Activated CD8-positive, alpha-beta T cell treated with anti-CD3 and anti-CD28 coated beads, Interleukin-2, amount 10 ng/mL, durations not matched to agents 7 days and 5 days (primary cell): ENCODE measurements at regions of chr12 and their contacts with region 1.

Region 1: DNA sequence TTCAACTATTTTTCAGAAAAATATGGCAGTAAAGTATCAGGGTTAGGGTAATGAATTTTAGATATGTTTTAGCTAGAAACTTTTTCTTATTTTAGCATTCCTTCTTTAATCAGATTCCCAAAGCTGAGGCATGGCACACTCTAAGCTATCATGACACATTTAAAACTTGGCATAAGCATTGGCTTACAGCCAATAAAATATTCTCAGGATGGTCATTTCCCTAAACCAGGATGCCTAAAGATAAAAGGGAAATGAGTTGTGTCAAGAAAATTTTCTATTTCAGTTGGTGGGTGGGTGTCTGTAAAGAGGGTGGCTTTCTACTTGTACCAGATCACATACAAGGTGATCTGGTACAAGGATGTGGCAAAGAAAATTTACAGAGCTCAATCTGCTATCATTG is 47.8 kb downstream of the PEBP1 start:
- DNase-seq: no peak
- ATAC-seq: no peak
- H3K4me3 Mint-ChIP-seq: no peak overlapping the region
- H3K27ac Mint-ChIP-seq: no peak overlapping the region
- H3K4me1 Mint-ChIP-seq: peaks cover 5% of the 10 kb centered on the region
- H3K27me3 Mint-ChIP-seq: no peaks in the 10 kb centered on the region

Region 2: GRCh38 chr12:118164798-118165486 is 18.8 kb before region 1 on chr12:
- CTCF ChIA-PET with region 1: interaction called, 12 read pairs
- POLR2A ChIA-PET with region 1: no interaction called
- DNase-seq: no peak
- ATAC-seq: no peak
- H3K4me3 Mint-ChIP-seq: no peak overlapping the region
- H3K27ac Mint-ChIP-seq: no peak overlapping the region
- H3K4me1 Mint-ChIP-seq: peaks cover 2% of the 10 kb centered on the region
- H3K27me3 Mint-ChIP-seq: no peaks in the 10 kb centered on the region

Region 3: GRCh38 chr12:118237052-118237665 is 53.5 kb after region 1 on chr12:
- CTCF ChIA-PET with region 1: no interaction called
- POLR2A ChIA-PET with region 1: no interaction called
- DNase-seq: no peak
- ATAC-seq: no peak
- H3K4me3 Mint-ChIP-seq: no peak overlapping the region
- H3K27ac Mint-ChIP-seq: peak overlapping the region; percentile 35
- H3K4me1 Mint-ChIP-seq: peaks cover 18% of the 10 kb centered on the region
- H3K27me3 Mint-ChIP-seq: no peaks in the 10 kb centered on the region